ENCODE measurements at regions of chr22 and their contacts with region 1.

Region 1: DNA sequence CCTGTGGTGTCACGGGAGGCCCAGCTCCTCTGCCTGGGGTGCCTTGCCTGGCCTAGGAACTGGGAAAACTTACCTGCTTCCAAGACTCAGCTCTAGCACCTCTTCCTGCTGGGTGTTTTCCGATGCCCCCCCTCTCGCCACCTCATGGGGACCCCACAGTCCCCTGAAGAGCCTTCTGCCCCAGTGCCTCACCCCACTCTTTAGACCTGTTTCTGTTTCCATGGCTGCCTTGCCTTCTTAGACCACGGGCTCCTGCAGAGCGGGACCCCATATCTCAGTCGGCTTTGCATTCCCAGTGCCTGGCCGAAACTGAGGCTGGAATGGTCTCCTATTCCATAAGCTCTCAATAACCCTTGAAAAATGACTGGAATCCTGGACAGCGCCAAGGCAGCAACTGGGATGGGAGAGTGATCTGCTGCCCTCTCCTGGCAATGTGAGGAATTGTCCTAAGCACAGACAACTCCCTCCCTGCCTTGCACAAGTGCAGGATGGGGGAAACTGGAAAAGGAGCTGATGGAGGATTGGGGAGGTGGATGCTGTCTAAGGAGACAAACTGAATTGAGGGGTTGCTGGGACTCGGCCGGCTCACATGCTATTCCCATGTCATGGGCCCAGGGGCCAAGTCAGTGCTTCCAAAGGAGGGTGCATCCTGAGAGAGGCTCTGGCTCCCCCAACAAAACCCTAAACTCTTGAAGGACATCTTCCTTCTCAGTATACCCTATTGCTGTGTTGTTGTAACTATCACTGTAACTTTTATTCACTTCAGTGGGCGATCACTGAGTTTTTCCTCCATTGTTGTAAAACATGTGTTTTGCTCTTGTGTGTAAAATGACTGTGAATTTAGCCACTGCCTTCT is 26.6 kb upstream of the IL17RA start:
- DNase-seq: peak; percentile 79
- H3K4me3 Mint-ChIP-seq: no peak overlapping the region
- H3K27ac Mint-ChIP-seq: peak overlapping the region; percentile 24
- H3K4me1 Mint-ChIP-seq: peaks cover 5% of the 10 kb centered on the region
- H3K27me3 Mint-ChIP-seq: no peaks in the 10 kb centered on the region
- CTCF ChIP-seq: peak; percentile 88

Region 2: GRCh38 chr22:16917144-16918003 is 140.8 kb before region 1 on chr22:
- CTCF ChIA-PET with region 1: interaction called, 107 read pairs
- POLR2A ChIA-PET with region 1: interaction called, 8 read pairs
- intact Hi-C with region 1: loop called (anchors 1 kb)
- DNase-seq: peak; percentile 75
- H3K4me3 Mint-ChIP-seq: no peak overlapping the region
- H3K27ac Mint-ChIP-seq: no peak overlapping the region
- H3K4me1 Mint-ChIP-seq: peaks cover 7% of the 10 kb centered on the region
- H3K27me3 Mint-ChIP-seq: peaks cover 15% of the 10 kb centered on the region
- CTCF ChIP-seq: peak; percentile 60

Region 3: DNA sequence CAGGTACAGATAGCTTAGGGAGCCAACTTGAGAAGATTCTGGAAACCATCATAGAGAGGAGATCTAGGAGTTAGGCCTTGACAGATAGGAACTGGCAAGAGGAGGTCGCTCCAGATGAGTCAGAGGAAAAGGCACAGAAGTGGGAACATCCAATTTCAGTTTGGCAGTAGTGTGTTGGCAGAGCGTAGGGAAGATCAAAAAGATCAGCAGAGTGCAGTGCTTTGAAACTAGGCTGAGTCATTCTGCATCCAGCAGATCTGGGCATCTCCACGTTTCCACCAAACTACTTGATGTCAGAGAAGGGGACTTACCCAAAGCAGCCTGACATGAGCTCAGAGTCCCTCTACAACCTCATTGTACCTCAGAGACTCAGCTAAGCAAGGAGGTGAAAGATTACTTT is 108.6 kb before region 1 on chr22:
- CTCF ChIA-PET with region 1: interaction called, 10 read pairs
- POLR2A ChIA-PET with region 1: interaction called, 4 read pairs
- intact Hi-C with region 1: no loop called
- DNase-seq: peak; percentile 56
- H3K4me3 Mint-ChIP-seq: no peak overlapping the region
- H3K27ac Mint-ChIP-seq: no peak overlapping the region
- H3K4me1 Mint-ChIP-seq: peaks cover 9% of the 10 kb centered on the region
- H3K27me3 Mint-ChIP-seq: no peaks in the 10 kb centered on the region
- CTCF ChIP-seq: no peak

Region 4: GRCh38 chr22:17047656-17048055 is 10.5 kb before region 1 on chr22:
- CTCF ChIA-PET with region 1: interaction called, 25 read pairs
- POLR2A ChIA-PET with region 1: no interaction called
- intact Hi-C with region 1: no loop called
- DNase-seq: no peak
- H3K4me3 Mint-ChIP-seq: no peak overlapping the region
- H3K27ac Mint-ChIP-seq: peak overlapping the region; percentile 17
- H3K4me1 Mint-ChIP-seq: no peaks in the 10 kb centered on the region
- H3K27me3 Mint-ChIP-seq: no peaks in the 10 kb centered on the region
- CTCF ChIP-seq: no peak

Region 5: GRCh38 chr22:17191163-17191784 is 133.1 kb after region 1 on chr22:
- CTCF ChIA-PET with region 1: no interaction called
- POLR2A ChIA-PET with region 1: no interaction called
- intact Hi-C with region 1: no loop called
- DNase-seq: peak; percentile 21
- H3K4me3 Mint-ChIP-seq: no peak overlapping the region
- H3K27ac Mint-ChIP-seq: no peak overlapping the region
- H3K4me1 Mint-ChIP-seq: no peaks in the 10 kb centered on the region
- H3K27me3 Mint-ChIP-seq: no peaks in the 10 kb centered on the region
- CTCF ChIP-seq: no peak